Caco-2 (cell line): ENCODE measurements at regions of chr3 and their contacts with region 1.

Region 1: DNA sequence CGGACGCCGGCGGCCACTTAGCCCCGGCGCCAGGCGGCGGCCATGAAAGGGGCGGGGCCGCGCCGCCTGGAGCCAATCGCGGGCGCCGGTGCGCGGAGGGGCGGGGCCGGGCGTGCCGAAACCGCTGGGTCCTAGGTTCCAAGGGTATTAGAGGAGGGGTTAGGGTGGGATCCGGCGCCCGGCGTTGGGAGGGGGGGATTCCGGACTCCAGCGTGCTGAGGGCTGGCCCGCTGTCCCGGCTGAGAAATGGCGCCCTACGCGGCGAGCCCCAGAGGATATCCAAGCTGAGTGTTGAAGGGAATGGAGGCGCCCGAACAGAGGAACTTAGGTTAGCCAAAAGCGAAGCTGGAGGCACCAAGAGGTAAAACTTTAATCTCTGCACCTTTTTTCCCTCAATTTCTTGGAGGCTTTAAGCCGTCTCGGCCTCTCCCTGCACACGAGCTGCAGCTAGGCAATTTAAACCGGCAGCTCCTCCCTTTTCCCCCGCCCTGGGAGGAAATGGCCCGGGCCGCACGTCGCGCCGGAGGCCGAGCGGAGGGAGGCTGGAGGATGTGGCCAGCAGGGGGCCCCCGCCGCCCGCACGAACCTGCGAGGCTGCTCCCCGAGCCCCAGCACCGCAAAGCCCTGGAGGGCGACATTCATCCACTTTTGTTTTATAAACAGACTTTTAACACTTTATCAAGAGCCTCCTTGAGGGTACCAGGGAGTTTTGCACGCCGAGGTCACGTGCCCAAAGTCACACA is at the start of gene XXYLT1:
- DNase-seq: peak; percentile 92 to 94
- H3K4me3 ChIP-seq: peak within 1 kb of the TSS; percentile 91
- H3K4me3 Mint-ChIP-seq: peak within 1 kb of the TSS; percentile 88
- H3K27ac Mint-ChIP-seq: peak within 1 kb of the TSS; percentile 80
- H3K4me1 ChIP-seq: peaks cover 36% of the 10 kb centered on the region
- H3K4me1 Mint-ChIP-seq: peaks cover 21% of the 10 kb centered on the region
- H3K27me3 ChIP-seq: no peaks in the 10 kb centered on the region
- H3K27me3 Mint-ChIP-seq: no peaks in the 10 kb centered on the region
- CTCF ChIP-seq: peak; percentile 87 to 96
- total RNA-seq, gene XXYLT1: 12.2 and 14.2 TPM in 2 replicates

Region 2: GRCh38 chr3:195259475-195260279 is 11.6 kb before region 1 on chr3:
- CTCF ChIA-PET with region 1: interaction called, 14 read pairs
- POLR2A ChIA-PET with region 1: no interaction called
- intact Hi-C with region 1: no loop called
- DNase-seq: peak; percentile 94
- H3K4me3 ChIP-seq: peak overlapping the region; percentile 83
- H3K4me3 Mint-ChIP-seq: peak overlapping the region; percentile 70
- H3K27ac Mint-ChIP-seq: peak overlapping the region; percentile 69
- H3K4me1 ChIP-seq: peaks cover 9% of the 10 kb centered on the region; the same call in 1 of the 2 replicates
- H3K4me1 Mint-ChIP-seq: peaks cover 6% of the 10 kb centered on the region
- H3K27me3 ChIP-seq: no peaks in the 10 kb centered on the region
- H3K27me3 Mint-ChIP-seq: no peaks in the 10 kb centered on the region
- CTCF ChIP-seq: peak; percentile 18 to 73

Region 3: GRCh38 chr3:195385526-195385925 is 114.2 kb after region 1 on chr3:
- CTCF ChIA-PET with region 1: interaction called, 22 read pairs
- POLR2A ChIA-PET with region 1: no interaction called
- intact Hi-C with region 1: no loop called
- DNase-seq: peak in 1 of 2 experiments; percentile 14
- H3K4me3 ChIP-seq: no peak overlapping the region
- H3K4me3 Mint-ChIP-seq: no peak overlapping the region
- H3K27ac Mint-ChIP-seq: peak overlapping the region; percentile 10
- H3K4me1 ChIP-seq: peaks cover 26% of the 10 kb centered on the region
- H3K4me1 Mint-ChIP-seq: peaks cover 18% of the 10 kb centered on the region
- H3K27me3 ChIP-seq: no peaks in the 10 kb centered on the region
- H3K27me3 Mint-ChIP-seq: no peaks in the 10 kb centered on the region
- CTCF ChIP-seq: no peak

Region 4: GRCh38 chr3:195522254-195523023 is 251.2 kb after region 1 on chr3:
- CTCF ChIA-PET with region 1: interaction called, 6 read pairs
- POLR2A ChIA-PET with region 1: no interaction called
- intact Hi-C with region 1: loop called (anchors 1 kb)
- DNase-seq: peak in 1 of 2 experiments; percentile 27
- H3K4me3 ChIP-seq: no peak overlapping the region
- H3K4me3 Mint-ChIP-seq: no peak overlapping the region
- H3K27ac Mint-ChIP-seq: no peak overlapping the region
- H3K4me1 ChIP-seq: no peaks in the 10 kb centered on the region
- H3K4me1 Mint-ChIP-seq: no peaks in the 10 kb centered on the region
- H3K27me3 ChIP-seq: no peaks in the 10 kb centered on the region
- H3K27me3 Mint-ChIP-seq: no peaks in the 10 kb centered on the region
- CTCF ChIP-seq: peak; percentile 47 to 71

Region 5: GRCh38 chr3:195548987-195549386 is 277.7 kb after region 1 on chr3:
- CTCF ChIA-PET with region 1: interaction called, 13 read pairs
- POLR2A ChIA-PET with region 1: no interaction called
- intact Hi-C with region 1: no loop called
- DNase-seq: no peak
- H3K4me3 ChIP-seq: no peak overlapping the region
- H3K4me3 Mint-ChIP-seq: peak overlapping the region; percentile 68
- H3K27ac Mint-ChIP-seq: peak overlapping the region; percentile 90
- H3K4me1 ChIP-seq: peaks cover 70% of the 10 kb centered on the region
- H3K4me1 Mint-ChIP-seq: peaks cover 72% of the 10 kb centered on the region
- H3K27me3 ChIP-seq: no peaks in the 10 kb centered on the region
- H3K27me3 Mint-ChIP-seq: no peaks in the 10 kb centered on the region
- CTCF ChIP-seq: no peak

Region 6: GRCh38 chr3:196023947-196024346 is 752.7 kb after region 1 on chr3:
- CTCF ChIA-PET with region 1: no interaction called
- POLR2A ChIA-PET with region 1: no interaction called
- intact Hi-C with region 1: no loop called
- DNase-seq: no peak
- H3K4me3 ChIP-seq: no peak overlapping the region
- H3K4me3 Mint-ChIP-seq: no peak overlapping the region
- H3K27ac Mint-ChIP-seq: no peak overlapping the region
- H3K4me1 ChIP-seq: no peaks in the 10 kb centered on the region
- H3K4me1 Mint-ChIP-seq: no peaks in the 10 kb centered on the region
- H3K27me3 ChIP-seq: no peaks in the 10 kb centered on the region
- H3K27me3 Mint-ChIP-seq: peaks cover 9% of the 10 kb centered on the region
- CTCF ChIP-seq: no peak